Activated CD4-positive, alpha-beta memory T cell treated with anti-CD3 and anti-CD28 coated beads, Interleukin-2, amount 10 ng/mL, durations not matched to agents 7 days and 5 days (primary cell): ENCODE measurements at regions of chr2 and their contacts with region 1.

Region 1: DNA sequence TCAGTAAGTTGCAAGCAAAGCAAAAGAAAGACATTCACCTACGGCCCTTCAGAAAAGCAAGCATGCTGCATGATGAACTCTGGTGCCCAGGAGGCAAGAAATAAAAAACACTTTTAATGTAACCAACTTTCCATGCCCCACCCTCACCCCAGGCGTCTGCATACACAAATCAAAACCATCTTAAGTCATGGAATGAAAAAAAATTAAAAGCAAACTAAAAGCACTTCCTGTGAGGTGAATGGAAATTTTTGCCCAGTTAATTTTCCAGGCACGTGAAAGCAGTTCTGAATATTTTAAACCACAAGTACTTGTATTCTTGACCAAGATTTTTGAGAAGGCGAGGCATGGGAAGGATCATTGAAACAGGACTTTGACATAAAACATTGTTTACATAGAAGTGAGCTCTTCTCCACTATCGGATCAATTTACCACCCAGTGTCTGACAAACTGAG is 2.5 kb upstream of the ICOS start:
- DNase-seq: peak; percentile 52
- H3K4me3 Mint-ChIP-seq: peak overlapping the region; percentile 47
- H3K27ac Mint-ChIP-seq: peak overlapping the region; percentile 86
- H3K4me1 Mint-ChIP-seq: peaks cover 41% of the 10 kb centered on the region
- H3K27me3 Mint-ChIP-seq: no peaks in the 10 kb centered on the region

Region 2: GRCh38 chr2:203706403-203706802 is 227.7 kb before region 1 on chr2 and contains the start of gene CD28:
- CTCF ChIA-PET with region 1: no interaction called
- POLR2A ChIA-PET with region 1: interaction called, 18 read pairs
- DNase-seq: peak; percentile 95
- H3K4me3 Mint-ChIP-seq: peak within 1 kb of the TSS; percentile 90
- H3K27ac Mint-ChIP-seq: peak within 1 kb of the TSS; percentile 97
- H3K4me1 Mint-ChIP-seq: peaks cover 46% of the 10 kb centered on the region
- H3K27me3 Mint-ChIP-seq: no peaks in the 10 kb centered on the region
- total RNA-seq, gene CD28: 194 to 205 TPM

Region 3: DNA sequence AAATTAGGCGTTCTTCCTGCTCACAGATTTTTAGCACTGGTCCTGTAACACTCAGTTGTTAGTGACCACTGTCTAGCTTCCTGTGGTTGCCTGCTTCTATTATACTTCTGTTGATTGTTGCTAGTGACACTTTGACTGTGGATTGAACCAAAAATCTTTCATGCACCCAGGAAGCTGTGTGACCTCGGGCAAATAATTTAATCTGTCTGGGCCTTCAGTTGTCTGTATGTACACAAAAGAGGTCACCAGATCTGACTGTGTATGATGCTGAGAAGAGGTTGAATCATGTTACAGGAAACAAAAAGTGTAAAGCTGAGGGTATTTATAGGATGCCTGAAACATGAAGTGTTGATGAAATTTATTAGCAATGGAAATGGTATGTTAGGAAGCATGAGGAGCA is 15.2 kb after region 1 on chr2:
- CTCF ChIA-PET with region 1: interaction called, 15 read pairs
- POLR2A ChIA-PET with region 1: interaction called, 131 read pairs
- DNase-seq: peak; percentile 33
- H3K4me3 Mint-ChIP-seq: peak overlapping the region; percentile 40
- H3K27ac Mint-ChIP-seq: peak overlapping the region; percentile 70
- H3K4me1 Mint-ChIP-seq: peaks cover 87% of the 10 kb centered on the region
- H3K27me3 Mint-ChIP-seq: no peaks in the 10 kb centered on the region

Region 4: GRCh38 chr2:203997980-203998809 is 64.1 kb after region 1 on chr2:
- CTCF ChIA-PET with region 1: interaction called, 3 read pairs
- POLR2A ChIA-PET with region 1: interaction called, 22 read pairs
- DNase-seq: no peak
- H3K4me3 Mint-ChIP-seq: peak overlapping the region; percentile 29
- H3K27ac Mint-ChIP-seq: peak overlapping the region; percentile 61
- H3K4me1 Mint-ChIP-seq: peaks cover 63% of the 10 kb centered on the region
- H3K27me3 Mint-ChIP-seq: no peaks in the 10 kb centered on the region

Region 5: GRCh38 chr2:204108330-204108751 is 174.3 kb after region 1 on chr2:
- CTCF ChIA-PET with region 1: interaction called, 6 read pairs
- POLR2A ChIA-PET with region 1: interaction called, 11 read pairs
- DNase-seq: peak; percentile 64
- H3K4me3 Mint-ChIP-seq: peak overlapping the region; percentile 64
- H3K27ac Mint-ChIP-seq: peak overlapping the region; percentile 80
- H3K4me1 Mint-ChIP-seq: peaks cover 78% of the 10 kb centered on the region
- H3K27me3 Mint-ChIP-seq: peaks cover 6% of the 10 kb centered on the region